Right ventricle myocardium inferior (tissue), 1 donor: ENCODE measurements at regions of chr14 and their contacts with region 1.

Region 1: DNA sequence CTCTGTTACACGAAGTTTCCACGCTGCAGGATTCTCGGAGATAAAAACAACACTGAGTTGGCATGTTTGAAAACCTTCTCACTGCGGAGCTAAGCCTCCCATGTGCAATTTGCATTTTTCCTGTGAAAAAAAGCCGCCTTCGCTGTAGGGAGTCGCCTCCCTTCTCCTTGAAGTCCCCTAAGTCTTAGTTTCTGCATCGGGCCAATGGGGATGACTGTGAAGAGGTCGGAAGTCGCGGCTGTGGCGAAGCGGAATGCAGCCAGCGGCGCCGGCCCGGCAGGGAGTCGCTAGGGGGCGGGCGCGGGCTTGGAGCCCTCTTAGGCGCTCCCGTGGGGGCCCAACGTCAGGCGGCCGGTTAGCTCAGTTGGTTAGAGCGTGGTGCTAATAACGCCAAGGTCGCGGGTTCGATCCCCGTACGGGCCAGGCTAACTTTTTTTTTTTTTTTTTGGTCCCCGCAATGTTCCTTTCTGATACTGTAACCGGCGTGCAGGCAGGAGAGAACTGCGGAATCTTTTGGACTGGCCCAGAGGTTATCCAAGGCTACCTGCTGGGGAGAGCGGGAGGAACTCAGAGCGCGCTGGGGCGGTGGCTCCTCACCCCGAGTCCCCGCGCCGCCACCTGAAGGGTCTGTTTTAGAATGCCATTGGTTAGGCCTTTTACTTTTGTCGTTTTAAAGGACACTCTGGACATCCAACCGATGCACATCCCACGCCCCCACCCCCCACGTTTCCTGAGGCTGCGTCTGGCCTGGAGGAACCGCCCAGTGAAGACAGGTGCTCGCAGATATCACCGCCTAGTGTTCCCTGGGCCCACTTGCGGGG is 2.6 kb upstream of the ZNF839 start:
- DNase-seq: peak; percentile 96
- ATAC-seq: peak; percentile 85

Region 2: DNA sequence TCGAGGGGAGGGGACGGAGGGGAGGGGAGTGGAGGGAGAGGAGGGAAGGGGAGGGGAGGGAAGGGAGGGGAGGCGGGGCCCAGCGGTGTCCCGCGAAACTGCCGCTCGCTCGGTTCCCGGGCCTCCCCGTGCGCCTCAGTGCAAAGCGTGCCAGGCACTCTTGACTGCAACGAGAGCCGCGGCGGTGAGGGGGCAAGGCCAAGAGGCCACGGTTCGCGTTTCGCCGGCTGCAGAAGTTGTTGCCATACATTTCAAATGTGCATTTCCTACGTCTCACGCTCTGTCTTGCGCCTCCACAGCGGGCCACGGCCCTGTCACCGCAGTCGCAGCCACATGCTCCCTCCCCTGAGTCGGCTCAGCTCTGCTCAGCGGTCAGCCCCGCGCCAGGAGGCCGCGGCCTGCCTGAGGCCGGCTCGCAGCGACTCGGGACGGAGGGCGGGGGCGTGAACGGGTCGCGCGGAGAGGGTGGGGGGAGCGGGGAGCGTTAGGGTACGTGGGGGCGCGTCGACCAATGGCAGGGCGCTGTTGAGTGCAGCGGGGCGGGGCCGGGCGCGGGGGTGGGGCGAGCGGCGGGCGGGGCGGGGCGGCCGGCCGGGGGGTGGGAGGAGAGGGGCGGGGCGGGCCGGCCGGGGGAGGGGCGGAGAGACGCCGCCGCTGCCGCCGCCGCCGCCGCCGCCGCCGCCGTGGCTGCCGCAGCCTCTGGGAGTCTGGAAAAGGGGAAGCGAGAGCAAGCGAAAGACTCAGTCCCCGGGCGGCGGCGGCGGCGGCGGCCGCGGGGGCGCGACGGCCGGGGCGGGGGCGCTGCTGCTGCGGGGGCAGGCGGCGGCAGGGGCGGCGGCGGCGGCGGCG is 555.7 kb before region 1 on chr14 and contains the start of gene PPP2R5C:
- intact Hi-C with region 1: loop called (anchors 5 kb)
- DNase-seq: peak; percentile 96
- ATAC-seq: peak; percentile 89
- total RNA-seq, gene PPP2R5C: 199 TPM

Region 3: DNA sequence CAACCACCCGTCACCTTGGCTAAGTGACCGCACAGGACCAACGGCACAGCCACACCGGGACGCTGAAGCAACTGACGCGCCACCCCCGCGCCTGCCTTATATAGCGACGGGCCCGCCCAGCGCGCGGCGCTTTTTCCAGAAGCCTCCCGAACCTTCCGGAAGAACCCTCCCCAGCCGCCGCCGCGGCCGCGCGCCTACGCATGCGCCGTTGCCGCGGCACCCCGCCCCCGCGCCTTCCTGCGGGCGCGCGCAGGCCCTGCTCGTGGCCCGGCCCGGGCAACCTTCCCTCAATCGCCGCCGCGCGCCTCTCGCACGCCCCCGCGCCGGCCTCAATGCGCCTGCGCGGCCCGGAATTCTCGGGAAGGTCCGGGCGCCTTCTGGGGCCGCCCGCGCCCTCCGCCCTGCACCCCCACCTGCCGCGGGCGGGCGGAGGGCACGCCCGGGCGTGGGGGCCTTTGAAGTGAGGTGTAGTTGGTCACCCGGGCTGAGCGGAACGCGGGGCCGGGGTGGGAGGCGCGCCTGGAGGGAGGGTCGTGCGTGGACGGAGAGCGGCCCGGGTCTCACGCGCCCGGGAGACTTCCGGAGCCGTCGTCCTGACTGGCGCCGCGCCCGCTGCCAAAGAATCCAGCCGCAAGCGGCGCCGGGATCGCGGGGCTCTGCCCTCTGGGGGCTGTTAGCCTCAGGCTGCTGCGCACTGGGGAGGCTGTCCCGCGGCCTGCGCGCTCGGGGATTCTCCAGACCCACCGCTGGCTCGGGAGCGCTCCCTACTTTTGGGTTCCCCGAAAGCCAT is 229.8 kb before region 1 on chr14 and contains the start of gene HSP90AA1:
- intact Hi-C with region 1: loop called (anchors 1 kb)
- DNase-seq: peak; percentile 97
- ATAC-seq: peak; percentile 91
- total RNA-seq, gene HSP90AA1: 484 TPM

Region 4: GRCh38 chr14:102215071-102215470 is 101.9 kb before region 1 on chr14:
- intact Hi-C with region 1: loop called (anchors 5 kb)
- DNase-seq: no peak
- ATAC-seq: peak; percentile 75

Region 5: GRCh38 chr14:102509744-102510615 is 193.0 kb after region 1 on chr14 and contains the start of gene ANKRD9:
- intact Hi-C with region 1: loop called (anchors 5 kb)
- DNase-seq: peak; percentile 98
- ATAC-seq: peak; percentile 80
- total RNA-seq, gene ANKRD9: 148 TPM